Vagina (tissue), 2 donors: ENCODE measurements at regions of chr3 and their contacts with region 1.

Region 1: GRCh38 chr3:157204880-157205279 is 44.9 kb upstream of the CCNL1 start:
- DNase-seq: no peak
- H3K4me3 ChIP-seq: no peak overlapping the region
- H3K27ac ChIP-seq: no peak overlapping the region
- H3K4me1 ChIP-seq: no peaks in the 10 kb centered on the region
- H3K27me3 ChIP-seq: no peaks in the 10 kb centered on the region
- CTCF ChIP-seq: no peak
- POLR2A ChIP-seq: no peak

Region 2: GRCh38 chr3:157064402-157064801 is 140.5 kb before region 1 on chr3:
- intact Hi-C with region 1: no loop called
- DNase-seq: no peak
- H3K4me3 ChIP-seq: no peak overlapping the region
- H3K27ac ChIP-seq: no peak overlapping the region
- H3K4me1 ChIP-seq: no peaks in the 10 kb centered on the region
- H3K27me3 ChIP-seq: no peaks in the 10 kb centered on the region
- CTCF ChIP-seq: no peak
- POLR2A ChIP-seq: no peak

Region 3: DNA sequence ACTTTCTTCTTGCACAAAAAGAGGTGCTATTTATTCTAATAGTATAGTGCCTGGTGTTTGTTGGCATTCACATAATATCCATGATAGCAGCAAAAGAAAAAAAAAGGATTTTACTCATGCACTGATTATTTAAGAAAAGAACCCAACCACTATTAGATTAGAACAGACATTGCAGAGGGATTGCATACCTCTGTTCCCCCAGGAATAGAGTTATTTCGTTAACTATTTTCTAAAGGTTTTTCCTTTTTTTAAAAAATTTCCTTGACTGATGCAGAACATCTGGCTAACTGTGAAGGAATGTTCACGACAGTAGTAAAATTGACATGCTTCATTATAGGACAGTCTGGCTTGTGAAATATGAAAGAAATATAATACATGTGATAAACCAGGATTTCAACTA is 95.2 kb after region 1 on chr3:
- intact Hi-C with region 1: no loop called
- DNase-seq: no peak
- H3K4me3 ChIP-seq: no peak overlapping the region
- H3K27ac ChIP-seq: no peak overlapping the region
- H3K4me1 ChIP-seq: no peaks in the 10 kb centered on the region
- H3K27me3 ChIP-seq: no peaks in the 10 kb centered on the region
- CTCF ChIP-seq: no peak
- POLR2A ChIP-seq: no peak

Region 4: DNA sequence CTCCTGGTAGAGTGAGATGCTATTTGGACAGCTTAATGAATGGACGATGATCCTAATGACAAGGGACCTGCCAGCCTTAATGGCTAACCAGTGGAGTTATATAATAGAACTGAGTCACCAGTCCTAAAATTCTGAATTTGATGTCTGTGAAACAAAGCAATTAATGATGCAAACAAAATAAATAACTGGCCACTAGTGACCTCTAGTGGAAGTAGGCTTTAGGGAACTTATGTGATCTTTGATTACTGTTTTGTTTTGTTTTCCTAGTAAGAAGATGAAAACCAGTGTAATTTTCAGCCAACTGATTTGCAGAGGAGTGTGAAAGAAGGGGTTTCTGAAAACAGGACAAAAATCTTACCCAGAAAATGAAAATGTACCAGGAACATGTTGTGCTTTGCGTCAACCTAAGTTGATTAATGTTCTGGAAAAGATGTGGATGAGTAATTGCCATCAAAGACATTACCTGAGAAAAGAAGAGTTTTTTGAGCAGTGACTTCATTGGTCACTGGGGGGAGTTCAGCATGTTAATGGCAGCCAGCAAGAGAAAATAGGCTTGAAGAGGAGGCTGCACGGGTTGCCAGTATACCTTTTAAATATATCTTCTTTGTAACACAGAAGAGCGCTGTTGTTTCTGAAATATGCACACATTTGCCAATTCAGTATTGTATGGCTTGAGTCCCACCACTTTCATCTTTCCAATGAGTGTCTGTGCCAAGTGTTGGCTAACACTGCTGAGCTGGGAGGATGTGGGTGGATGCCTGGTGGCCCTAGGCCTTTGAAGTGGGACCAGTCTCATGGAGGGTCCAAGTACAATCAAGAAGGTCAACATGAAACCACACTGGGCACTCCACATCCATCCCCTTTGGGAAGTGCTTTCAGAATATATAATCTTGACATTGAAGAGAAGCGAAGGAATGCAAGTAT is 289.0 kb after region 1 on chr3:
- intact Hi-C with region 1: loop called (anchors 5 kb)
- DNase-seq: no peak
- H3K4me3 ChIP-seq: no peak overlapping the region
- H3K27ac ChIP-seq: no peak overlapping the region
- H3K4me1 ChIP-seq: peaks cover under 1% of the 10 kb centered on the region
- H3K27me3 ChIP-seq: no peaks in the 10 kb centered on the region
- CTCF ChIP-seq: peak; percentile 14 to 56 (median 42)
- POLR2A ChIP-seq: no peak